CD4-positive, alpha-beta memory T cell (primary cell): ENCODE measurements at regions of chr10 and their contacts with region 1.

Region 1: DNA sequence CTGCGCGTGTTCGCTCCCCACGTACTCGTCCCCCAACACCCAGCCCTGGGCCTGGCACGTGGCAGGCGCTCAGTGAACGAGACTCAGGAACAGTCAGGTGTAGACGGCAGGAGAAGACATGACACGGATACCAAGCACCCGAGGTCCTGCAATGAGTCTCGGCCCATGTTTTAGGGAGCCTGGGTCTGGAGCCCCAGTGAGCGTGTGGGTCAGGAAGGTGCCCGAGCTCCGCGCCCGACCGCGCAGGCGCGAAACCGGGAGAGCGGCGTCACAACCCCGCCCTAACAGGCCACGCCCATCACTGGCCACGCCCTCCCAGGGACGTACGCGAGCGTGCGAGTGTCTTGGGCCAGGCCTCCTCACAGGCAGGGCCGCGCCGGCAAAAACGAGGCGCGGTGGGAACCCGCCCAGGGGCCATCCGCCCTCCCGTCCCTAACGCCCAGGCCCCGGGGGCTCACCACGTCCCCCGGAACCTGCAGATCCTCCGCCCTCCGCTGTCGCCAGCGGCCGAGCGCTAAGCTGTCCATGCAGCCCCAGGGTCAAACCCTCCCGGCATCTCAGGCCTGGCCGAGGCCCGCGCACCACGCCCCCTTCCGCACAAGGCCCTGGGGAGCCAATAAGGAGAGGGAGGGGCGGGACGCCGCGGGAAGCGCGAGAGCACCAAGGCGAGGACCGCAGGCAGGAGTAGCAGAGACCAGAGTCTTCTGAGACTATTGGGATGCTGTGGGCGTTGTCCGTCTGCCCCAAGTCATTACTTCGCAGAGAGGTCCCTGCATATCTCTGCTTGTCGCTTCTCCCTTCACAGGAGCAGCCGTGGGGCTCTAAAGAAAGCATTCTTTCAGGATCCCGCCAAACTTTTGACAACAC is at the start of gene C10orf143:
- DNase-seq: peak; percentile 98 to 100 (median 99)
- H3K4me3 ChIP-seq: peak within 1 kb of the TSS; percentile 72 to 87
- H3K4me3 Mint-ChIP-seq: peak within 1 kb of the TSS; percentile 92 to 99 (median 98)
- H3K27ac ChIP-seq: peak within 1 kb of the TSS; percentile 87
- H3K27ac Mint-ChIP-seq: peak within 1 kb of the TSS; percentile 94 to 100 (median 99)
- H3K4me1 ChIP-seq: peaks cover 46% of the 10 kb centered on the region
- H3K4me1 Mint-ChIP-seq: peaks cover 34 to 72% (median 53%) of the 10 kb centered on the region in 4 donors
- H3K27me3 ChIP-seq: no peaks in the 10 kb centered on the region
- H3K27me3 Mint-ChIP-seq: no peaks in the 10 kb centered on the region
- total RNA-seq, gene C10orf143: 9.2 TPM

Region 2: GRCh38 chr10:129466703-129467358 is 643.6 kb before region 1 on chr10 and contains the start of gene MGMT:
- CTCF ChIA-PET with region 1: interaction called, 4 read pairs
- POLR2A ChIA-PET with region 1: interaction called, 29 read pairs
- intact Hi-C with region 1: loop called (anchors 1 kb)
- DNase-seq: peak; percentile 94 to 98 (median 95)
- H3K4me3 ChIP-seq: peak within 1 kb of the TSS; percentile 20 to 80
- H3K4me3 Mint-ChIP-seq: peak within 1 kb of the TSS; percentile 82 to 90 (median 86)
- H3K27ac ChIP-seq: peak within 1 kb of the TSS; percentile 68
- H3K27ac Mint-ChIP-seq: peak within 1 kb of the TSS; percentile 78 to 88 (median 84)
- H3K4me1 ChIP-seq: peaks cover 17% of the 10 kb centered on the region
- H3K4me1 Mint-ChIP-seq: peaks cover 7 to 27% (median 14%) of the 10 kb centered on the region in 4 donors
- H3K27me3 ChIP-seq: no peaks in the 10 kb centered on the region
- H3K27me3 Mint-ChIP-seq: peaks cover 0 to 2% of the 10 kb centered on the region in 2 donors
- total RNA-seq, gene MGMT: 18.5 to 21.2 TPM

Region 3: DNA sequence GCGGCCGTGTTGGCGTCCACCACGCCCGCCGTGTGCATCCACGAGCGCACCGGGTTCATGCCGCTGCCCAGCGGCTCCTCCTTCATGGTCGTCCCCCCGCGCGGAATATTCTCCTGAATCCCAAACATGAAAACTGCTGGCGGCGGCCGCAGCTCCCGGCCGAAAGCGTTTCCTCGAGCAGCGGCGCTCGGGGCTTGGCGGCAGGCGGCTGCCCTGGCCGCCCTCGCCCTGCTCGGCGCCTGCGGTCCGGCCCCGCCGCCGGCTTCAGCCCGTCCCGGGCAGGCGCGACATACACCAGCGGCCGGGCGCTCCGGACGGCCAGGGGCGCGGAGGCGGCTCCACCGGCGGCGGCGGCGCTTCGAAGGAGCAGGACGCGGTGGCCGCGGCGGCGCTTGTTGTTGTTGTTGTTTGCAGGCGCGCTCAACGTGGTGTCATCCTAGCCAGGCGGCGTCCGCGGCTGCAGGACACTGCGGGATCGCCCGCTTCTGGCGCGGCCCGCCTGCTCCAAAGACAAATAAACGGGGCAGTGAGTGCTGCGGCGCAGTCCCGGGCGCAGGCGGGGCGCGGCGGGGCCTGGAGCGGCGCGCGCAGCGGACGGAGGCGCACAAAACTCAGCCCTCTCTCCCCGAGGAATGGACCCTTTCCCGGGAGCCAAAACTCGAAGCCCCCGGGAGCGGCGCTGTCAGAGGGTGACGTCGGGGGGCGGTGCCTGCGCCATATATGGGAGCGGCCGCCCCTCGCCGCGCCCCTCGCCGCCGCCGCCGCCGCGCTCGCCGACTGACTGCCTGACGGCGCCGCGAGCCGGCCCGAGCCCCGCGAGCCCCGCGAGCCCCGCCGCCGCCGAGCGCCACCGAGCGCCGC is 146.6 kb before region 1 on chr10 and contains the start of gene EBF3:
- CTCF ChIA-PET with region 1: no interaction called
- POLR2A ChIA-PET with region 1: no interaction called
- intact Hi-C with region 1: loop called (anchors 5 kb)
- DNase-seq: peak in 3 of 5 donors; percentile 29 to 52 (median 42)
- H3K4me3 ChIP-seq: peak within 1 kb of the TSS in 1 of 2 donors; percentile 28
- H3K4me3 Mint-ChIP-seq: peak within 1 kb of the TSS in 7 of 8 donors; percentile 78 to 90 (median 82)
- H3K27ac ChIP-seq: no peak within 1 kb of the TSS
- H3K27ac Mint-ChIP-seq: peak within 1 kb of the TSS in 5 of 7 donors; percentile 15 to 59 (median 55)
- H3K4me1 ChIP-seq: peaks cover 13% of the 10 kb centered on the region
- H3K4me1 Mint-ChIP-seq: peaks cover 7 to 42% (median 21%) of the 10 kb centered on the region in 4 donors
- H3K27me3 ChIP-seq: peaks cover 35% of the 10 kb centered on the region
- H3K27me3 Mint-ChIP-seq: peaks cover 41 to 43% of the 10 kb centered on the region in 2 donors
- total RNA-seq, gene EBF3: not detected

Region 4: GRCh38 chr10:130022511-130023299 is 87.8 kb before region 1 on chr10:
- CTCF ChIA-PET with region 1: no interaction called
- POLR2A ChIA-PET with region 1: no interaction called
- intact Hi-C with region 1: no loop called
- DNase-seq: no peak
- H3K4me3 ChIP-seq: no peak overlapping the region
- H3K4me3 Mint-ChIP-seq: no peak overlapping the region
- H3K27ac ChIP-seq: no peak overlapping the region
- H3K27ac Mint-ChIP-seq: peak overlapping the region in 1 of 7 donors; percentile 59
- H3K4me1 ChIP-seq: no peaks in the 10 kb centered on the region
- H3K4me1 Mint-ChIP-seq: peaks cover 0 to 7% (median 0%) of the 10 kb centered on the region in 4 donors
- H3K27me3 ChIP-seq: no peaks in the 10 kb centered on the region
- H3K27me3 Mint-ChIP-seq: peaks cover 0 to 2% of the 10 kb centered on the region in 2 donors

Region 5: DNA sequence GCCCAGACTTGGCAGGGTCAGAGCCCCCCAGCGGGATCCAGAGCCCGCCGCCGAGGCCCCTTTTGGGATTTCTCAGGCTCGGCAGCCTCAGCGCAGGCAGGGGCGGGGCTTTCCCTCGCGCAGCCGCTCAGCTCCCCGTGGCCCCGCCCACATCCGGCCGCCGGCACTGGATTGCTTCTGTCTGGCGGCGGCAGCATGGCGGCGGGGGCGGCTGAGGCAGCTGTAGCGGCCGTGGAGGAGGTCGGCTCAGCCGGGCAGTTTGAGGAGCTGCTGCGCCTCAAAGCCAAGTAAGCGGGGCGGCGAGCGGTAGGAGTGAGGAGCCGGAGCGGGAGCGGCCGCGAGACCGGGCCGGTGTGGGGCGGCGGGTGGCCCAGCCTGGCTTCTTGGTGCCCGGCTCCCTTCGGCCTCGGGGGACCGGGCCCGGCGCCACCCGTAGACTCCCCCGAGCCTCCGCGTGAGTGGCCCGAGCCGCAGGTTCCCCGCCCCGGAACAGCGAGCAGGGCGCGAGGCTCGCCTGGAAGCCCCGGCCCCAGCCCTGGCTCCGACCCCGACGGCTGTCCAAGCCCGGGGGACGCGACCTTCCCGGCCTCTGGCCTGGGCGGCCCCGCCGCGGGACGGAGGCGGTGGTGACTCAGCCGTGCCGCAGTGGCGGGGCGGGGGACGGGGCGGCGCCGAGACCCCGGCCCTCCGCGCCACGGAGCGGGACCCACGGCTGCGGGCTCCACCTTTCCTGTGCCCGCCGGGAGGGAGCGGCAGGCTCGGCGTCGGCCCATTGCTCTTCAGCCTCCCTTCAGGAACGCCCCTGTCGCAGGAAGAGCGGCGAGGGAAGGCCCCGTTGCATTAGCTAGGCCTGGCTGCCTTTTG is 26.0 kb after region 1 on chr10 and contains the start of gene GLRX3:
- CTCF ChIA-PET with region 1: interaction called, 60 read pairs
- POLR2A ChIA-PET with region 1: interaction called, 178 read pairs
- intact Hi-C with region 1: loop called (anchors 1 kb)
- DNase-seq: peak; percentile 83 to 88 (median 85)
- H3K4me3 ChIP-seq: peak within 1 kb of the TSS; percentile 60 to 66
- H3K4me3 Mint-ChIP-seq: peak within 1 kb of the TSS; percentile 89 to 95 (median 92)
- H3K27ac ChIP-seq: peak within 1 kb of the TSS; percentile 69
- H3K27ac Mint-ChIP-seq: peak within 1 kb of the TSS; percentile 80 to 94 (median 88)
- H3K4me1 ChIP-seq: peaks cover 52% of the 10 kb centered on the region
- H3K4me1 Mint-ChIP-seq: peaks cover 23 to 55% (median 36%) of the 10 kb centered on the region in 4 donors
- H3K27me3 ChIP-seq: no peaks in the 10 kb centered on the region
- H3K27me3 Mint-ChIP-seq: peaks cover 0 to 2% of the 10 kb centered on the region in 2 donors
- total RNA-seq, gene GLRX3: 39.3 to 41.8 TPM

Region 6: GRCh38 chr10:130171196-130171595 is 60.7 kb after region 1 on chr10:
- CTCF ChIA-PET with region 1: interaction called, 5 read pairs
- POLR2A ChIA-PET with region 1: interaction called, 3 read pairs
- intact Hi-C with region 1: loop called (anchors 2 kb)
- DNase-seq: peak; percentile 55 to 65 (median 56)
- H3K4me3 ChIP-seq: no peak overlapping the region
- H3K4me3 Mint-ChIP-seq: peak overlapping the region; percentile 0 to 43 (median 26)
- H3K27ac ChIP-seq: no peak overlapping the region
- H3K27ac Mint-ChIP-seq: peak overlapping the region; percentile 1 to 44 (median 18)
- H3K4me1 ChIP-seq: peaks cover 43% of the 10 kb centered on the region
- H3K4me1 Mint-ChIP-seq: peaks cover 43 to 72% (median 54%) of the 10 kb centered on the region in 4 donors
- H3K27me3 ChIP-seq: no peaks in the 10 kb centered on the region
- H3K27me3 Mint-ChIP-seq: no peaks in the 10 kb centered on the region

Region 7: GRCh38 chr10:130190055-130190736 is 79.7 kb after region 1 on chr10:
- CTCF ChIA-PET with region 1: no interaction called
- POLR2A ChIA-PET with region 1: interaction called, 7 read pairs
- intact Hi-C with region 1: loop called (anchors 5 kb)
- DNase-seq: peak; percentile 85 to 91 (median 86)
- H3K4me3 ChIP-seq: peak overlapping the region in 1 of 2 donors; percentile 41
- H3K4me3 Mint-ChIP-seq: no peak overlapping the region
- H3K27ac ChIP-seq: no peak overlapping the region
- H3K27ac Mint-ChIP-seq: no peak overlapping the region
- H3K4me1 ChIP-seq: no peaks in the 10 kb centered on the region
- H3K4me1 Mint-ChIP-seq: peaks cover 2 to 11% (median 6%) of the 10 kb centered on the region in 4 donors
- H3K27me3 ChIP-seq: no peaks in the 10 kb centered on the region
- H3K27me3 Mint-ChIP-seq: peaks cover 0 to 1% of the 10 kb centered on the region in 2 donors